MCF 10A (cell line): ENCODE measurements at regions of chr20 and their contacts with region 1.

Region 1: GRCh38 chr20:40160097-40160550 is 528.9 kb downstream of the MAFB start:
- DNase-seq: peak; percentile 78
- H3K4me3 Mint-ChIP-seq: no peak overlapping the region
- H3K27ac Mint-ChIP-seq: no peak overlapping the region
- H3K4me1 Mint-ChIP-seq: no peaks in the 10 kb centered on the region
- H3K27me3 Mint-ChIP-seq: no peaks in the 10 kb centered on the region
- CTCF ChIP-seq: peak; percentile 78

Region 2: GRCh38 chr20:40144581-40144980 is 15.5 kb before region 1 on chr20:
- CTCF ChIA-PET with region 1: interaction called, 22 read pairs
- POLR2A ChIA-PET with region 1: no interaction called
- intact Hi-C with region 1: no loop called
- DNase-seq: no peak
- H3K4me3 Mint-ChIP-seq: no peak overlapping the region
- H3K27ac Mint-ChIP-seq: no peak overlapping the region
- H3K4me1 Mint-ChIP-seq: no peaks in the 10 kb centered on the region
- H3K27me3 Mint-ChIP-seq: peaks cover 70% of the 10 kb centered on the region
- CTCF ChIP-seq: no peak

Region 3: GRCh38 chr20:40197691-40198090 is 37.6 kb after region 1 on chr20:
- CTCF ChIA-PET with region 1: interaction called, 14 read pairs
- POLR2A ChIA-PET with region 1: no interaction called
- intact Hi-C with region 1: no loop called
- DNase-seq: no peak
- H3K4me3 Mint-ChIP-seq: no peak overlapping the region
- H3K27ac Mint-ChIP-seq: no peak overlapping the region
- H3K4me1 Mint-ChIP-seq: no peaks in the 10 kb centered on the region
- H3K27me3 Mint-ChIP-seq: no peaks in the 10 kb centered on the region
- CTCF ChIP-seq: no peak

Region 4: DNA sequence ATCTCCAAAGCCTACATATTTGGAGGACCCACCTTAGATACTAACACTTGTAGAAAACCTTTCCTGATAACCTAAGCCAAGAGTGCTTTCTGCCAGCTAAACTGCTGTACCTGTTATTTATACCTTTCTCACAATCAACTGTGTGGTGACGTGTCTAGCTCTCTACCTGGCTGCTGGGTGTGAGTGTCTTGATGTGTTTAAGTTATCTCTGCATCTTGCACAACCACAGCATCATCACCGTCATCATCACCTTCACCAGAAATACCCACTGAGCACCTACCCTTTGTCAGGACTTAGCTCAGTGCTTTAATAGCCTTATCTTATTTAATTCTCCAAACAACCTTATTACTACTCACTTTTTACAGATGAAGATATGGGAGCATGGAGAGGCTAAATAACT is 97.6 kb after region 1 on chr20:
- CTCF ChIA-PET with region 1: interaction called, 10 read pairs
- POLR2A ChIA-PET with region 1: no interaction called
- intact Hi-C with region 1: loop called (anchors 10 kb)
- DNase-seq: no peak
- H3K4me3 Mint-ChIP-seq: no peak overlapping the region
- H3K27ac Mint-ChIP-seq: no peak overlapping the region
- H3K4me1 Mint-ChIP-seq: peaks cover 8% of the 10 kb centered on the region
- H3K27me3 Mint-ChIP-seq: no peaks in the 10 kb centered on the region
- CTCF ChIP-seq: no peak

Region 5: GRCh38 chr20:40286975-40287531 is 126.9 kb after region 1 on chr20:
- CTCF ChIA-PET with region 1: interaction called, 31 read pairs
- POLR2A ChIA-PET with region 1: interaction called, 4 read pairs
- intact Hi-C with region 1: no loop called
- DNase-seq: peak; percentile 98
- H3K4me3 Mint-ChIP-seq: peak overlapping the region; percentile 40
- H3K27ac Mint-ChIP-seq: peak overlapping the region; percentile 92
- H3K4me1 Mint-ChIP-seq: peaks cover 36% of the 10 kb centered on the region
- H3K27me3 Mint-ChIP-seq: no peaks in the 10 kb centered on the region
- CTCF ChIP-seq: no peak

Region 6: DNA sequence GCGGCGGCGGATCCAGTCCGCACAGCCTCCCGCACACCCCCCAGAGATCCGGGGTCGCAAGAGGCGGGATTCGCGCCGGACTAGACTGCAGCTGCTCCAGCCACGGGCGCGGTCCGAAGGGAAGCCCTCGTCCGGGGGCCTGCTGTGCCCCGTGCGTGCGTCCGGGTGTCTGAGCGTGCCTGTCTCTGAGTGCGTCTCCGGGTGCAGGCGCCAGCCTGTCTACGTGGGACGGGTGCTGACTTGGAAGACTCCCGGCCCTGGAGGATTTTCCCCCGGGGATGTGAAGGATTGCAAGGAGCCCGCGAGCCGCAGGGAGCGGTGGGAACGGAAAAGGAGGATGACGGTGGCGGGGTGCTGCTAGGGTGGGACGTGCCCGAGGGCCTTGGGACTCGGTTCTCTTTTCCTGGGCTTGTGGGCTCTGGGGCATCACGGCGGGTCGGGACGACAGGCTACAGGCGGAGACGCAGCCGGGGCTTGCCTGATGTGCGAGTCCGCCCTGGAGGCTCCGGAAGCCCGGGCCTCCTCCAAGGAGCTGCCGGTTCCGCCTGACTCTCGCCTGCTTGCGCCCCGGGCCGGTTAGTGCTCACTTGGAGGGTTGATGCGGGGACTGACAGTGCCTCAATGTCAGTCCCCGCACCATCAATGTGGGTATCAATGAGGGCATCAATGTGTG is 523.2 kb after region 1 on chr20:
- CTCF ChIA-PET with region 1: interaction called, 75 read pairs
- POLR2A ChIA-PET with region 1: interaction called, 17 read pairs
- intact Hi-C with region 1: no loop called
- DNase-seq: no peak
- H3K4me3 Mint-ChIP-seq: no peak overlapping the region
- H3K27ac Mint-ChIP-seq: no peak overlapping the region
- H3K4me1 Mint-ChIP-seq: peaks cover 17% of the 10 kb centered on the region
- H3K27me3 Mint-ChIP-seq: no peaks in the 10 kb centered on the region
- CTCF ChIP-seq: no peak

Region 7: DNA sequence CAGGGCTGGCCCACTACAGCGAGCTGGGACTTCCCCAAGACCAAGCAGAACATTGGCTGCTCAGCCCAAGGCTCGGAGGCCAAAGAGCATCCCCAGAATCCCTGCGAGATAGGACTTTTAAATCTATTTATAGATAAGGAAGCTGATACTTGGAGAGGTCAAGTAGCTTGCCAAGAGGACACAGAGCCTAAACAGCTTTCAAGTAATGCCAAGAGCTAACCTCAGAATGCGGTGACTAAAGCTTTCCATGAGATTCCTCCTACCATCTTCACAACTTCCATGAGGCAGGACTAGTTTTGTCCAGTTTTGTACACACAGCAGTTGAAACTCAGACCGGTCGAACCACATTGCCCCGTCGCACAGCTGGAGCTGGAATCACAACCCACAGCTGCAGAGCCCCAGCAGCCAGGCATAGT is 700.4 kb after region 1 on chr20:
- CTCF ChIA-PET with region 1: no interaction called
- POLR2A ChIA-PET with region 1: no interaction called
- intact Hi-C with region 1: no loop called
- DNase-seq: peak; percentile 14
- H3K4me3 Mint-ChIP-seq: no peak overlapping the region
- H3K27ac Mint-ChIP-seq: no peak overlapping the region
- H3K4me1 Mint-ChIP-seq: no peaks in the 10 kb centered on the region
- H3K27me3 Mint-ChIP-seq: no peaks in the 10 kb centered on the region
- CTCF ChIP-seq: no peak